PC-9 (cell line): ENCODE measurements at regions of chr6 and their contacts with region 1.

Region 1: GRCh38 chr6:14876778-14877613 is 368.9 kb upstream of the JARID2 start:
- DNase-seq: peak; percentile 30 to 73
- H3K4me3 ChIP-seq: no peak overlapping the region
- H3K27ac ChIP-seq: peak overlapping the region; percentile 78
- H3K4me1 ChIP-seq: peaks cover 28% of the 10 kb centered on the region
- H3K27me3 ChIP-seq: no peaks in the 10 kb centered on the region
- CTCF ChIP-seq: no peak

Region 2: DNA sequence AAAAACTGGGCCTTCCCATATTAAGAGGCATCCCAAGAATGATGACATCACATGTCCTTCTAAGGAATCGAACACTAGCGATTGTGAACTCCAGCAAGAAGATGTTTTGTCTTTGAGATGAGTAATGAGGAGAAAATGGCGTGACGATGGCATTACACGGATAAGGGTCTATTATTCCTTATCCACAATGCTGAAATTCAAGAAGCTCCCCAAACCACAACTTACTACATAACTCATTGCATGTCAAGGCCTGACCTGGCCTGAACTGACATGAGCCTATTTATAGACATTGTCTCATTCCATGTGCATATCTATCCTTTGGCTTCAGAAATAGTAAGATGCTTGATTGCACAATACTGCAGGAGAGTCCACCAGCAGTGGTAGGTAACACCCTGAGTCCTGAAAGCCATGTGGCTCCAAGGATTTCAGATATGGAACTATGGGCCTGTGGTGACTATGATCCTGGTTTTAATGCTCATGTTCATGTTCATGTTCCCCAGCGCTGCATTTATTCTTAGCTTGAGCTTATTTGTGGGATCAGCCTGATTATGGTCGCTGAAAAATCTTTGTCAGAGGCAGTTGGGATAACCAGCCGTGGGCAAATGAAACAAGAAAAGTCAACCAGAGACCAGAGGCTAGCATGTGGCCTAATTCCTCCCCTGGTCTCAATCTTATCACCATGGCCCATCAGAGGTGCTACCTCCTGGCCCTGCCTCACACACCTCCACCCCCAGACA is 185.7 kb after region 1 on chr6:
- CTCF ChIA-PET with region 1: no interaction called
- POLR2A ChIA-PET with region 1: no interaction called
- intact Hi-C with region 1: loop called (anchors 5 kb)
- DNase-seq: peak in 1 of 2 experiments; percentile 86
- H3K4me3 ChIP-seq: no peak overlapping the region
- H3K27ac ChIP-seq: no peak overlapping the region
- H3K4me1 ChIP-seq: peaks cover 7% of the 10 kb centered on the region; the same call in 1 of the 2 replicates
- H3K27me3 ChIP-seq: no peaks in the 10 kb centered on the region
- CTCF ChIP-seq: no peak

Region 3: DNA sequence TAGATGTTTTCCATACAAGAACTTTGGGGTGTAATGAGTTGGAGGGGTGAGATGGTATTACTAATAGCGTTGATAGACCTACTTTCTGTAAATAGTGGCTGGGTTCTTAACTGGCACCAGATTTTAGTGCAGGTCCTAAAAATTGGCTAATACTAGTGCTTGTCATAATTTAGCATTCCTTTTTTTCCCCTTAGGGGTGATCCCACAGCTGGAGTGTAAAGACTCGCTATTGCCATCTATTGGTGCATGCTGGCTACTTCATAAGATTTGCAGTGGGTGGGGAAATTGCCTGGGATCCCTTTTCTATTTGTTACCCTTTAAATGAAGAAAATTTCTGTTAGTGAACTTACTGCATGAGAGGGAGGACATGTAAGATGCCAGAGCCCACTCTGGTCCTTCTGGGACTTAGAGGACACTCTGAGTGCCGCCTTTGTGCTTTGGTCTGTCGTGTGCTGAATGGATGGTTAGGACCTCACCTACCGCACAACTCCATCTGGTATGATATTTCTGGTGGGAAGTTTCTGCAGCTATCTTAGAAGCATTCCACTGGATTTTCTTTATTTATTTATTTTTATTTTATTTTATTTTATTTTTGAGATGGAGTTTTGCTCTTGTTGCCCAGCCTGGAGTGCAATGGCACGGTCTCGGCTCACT is 564.3 kb after region 1 on chr6:
- CTCF ChIA-PET with region 1: no interaction called
- POLR2A ChIA-PET with region 1: no interaction called
- intact Hi-C with region 1: loop called (anchors 10 kb)
- DNase-seq: peak; percentile 58 to 69
- H3K4me3 ChIP-seq: no peak overlapping the region
- H3K27ac ChIP-seq: no peak overlapping the region
- H3K4me1 ChIP-seq: peaks cover 46% of the 10 kb centered on the region
- H3K27me3 ChIP-seq: no peaks in the 10 kb centered on the region
- CTCF ChIP-seq: peak; percentile 81